ENCODE measurements at regions of chr9 and their contacts with region 1.

Region 1: GRCh38 chr9:136488247-136489214 is 5.7 kb upstream of the SEC16A start:
- DNase-seq: peak; percentile 71
- H3K4me3 Mint-ChIP-seq: no peak overlapping the region
- H3K27ac Mint-ChIP-seq: no peak overlapping the region
- H3K4me1 Mint-ChIP-seq: no peaks in the 10 kb centered on the region
- H3K27me3 Mint-ChIP-seq: no peaks in the 10 kb centered on the region
- CTCF ChIP-seq: peak; percentile 98

Region 2: DNA sequence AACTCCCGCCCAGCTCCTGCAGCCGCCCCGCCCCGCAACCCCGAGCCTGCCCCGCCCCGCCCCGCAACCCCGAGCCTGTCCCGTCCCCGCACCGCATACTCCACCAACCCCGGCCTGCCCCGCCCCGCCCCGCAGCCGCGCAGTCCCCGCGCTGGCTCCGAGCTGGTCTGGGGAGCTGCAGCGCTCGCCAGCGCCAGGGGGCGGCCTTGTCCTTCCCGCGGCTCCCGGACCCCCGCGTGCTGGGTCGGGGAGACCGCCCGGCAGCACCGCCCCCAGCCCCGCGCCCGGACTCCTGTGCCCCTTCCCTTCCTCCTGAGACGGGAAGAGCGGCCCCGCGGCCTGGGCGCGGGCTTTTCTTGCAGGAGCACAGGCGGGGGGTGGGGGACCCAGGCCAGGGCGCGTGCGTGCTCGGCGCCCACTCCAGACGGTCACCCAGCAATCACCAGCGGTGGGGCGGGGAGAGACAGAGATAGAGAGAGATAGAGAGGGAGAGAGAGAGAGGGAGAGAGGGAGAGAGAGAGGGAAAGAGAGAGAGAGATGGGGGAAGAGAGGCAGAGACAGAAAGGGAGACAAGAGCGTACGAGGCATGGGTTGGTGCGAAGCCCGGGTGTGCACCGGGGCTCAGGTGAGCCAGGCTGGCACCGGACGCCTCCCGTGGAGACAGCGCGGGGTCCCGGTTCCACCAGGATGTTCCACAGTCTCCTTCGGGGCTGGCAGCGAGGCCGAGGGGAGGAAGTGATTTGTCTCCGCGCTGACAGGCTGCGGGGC is 355.2 kb before region 1 on chr9:
- CTCF ChIA-PET with region 1: no interaction called
- POLR2A ChIA-PET with region 1: no interaction called
- intact Hi-C with region 1: no loop called
- DNase-seq: no peak
- H3K4me3 Mint-ChIP-seq: no peak overlapping the region
- H3K27ac Mint-ChIP-seq: no peak overlapping the region
- H3K4me1 Mint-ChIP-seq: no peaks in the 10 kb centered on the region
- H3K27me3 Mint-ChIP-seq: peaks cover 50% of the 10 kb centered on the region
- CTCF ChIP-seq: peak; percentile 34

Region 3: GRCh38 chr9:136211441-136212344 is 276.8 kb before region 1 on chr9:
- CTCF ChIA-PET with region 1: no interaction called
- POLR2A ChIA-PET with region 1: no interaction called
- intact Hi-C with region 1: no loop called
- DNase-seq: no peak
- H3K4me3 Mint-ChIP-seq: no peak overlapping the region
- H3K27ac Mint-ChIP-seq: no peak overlapping the region
- H3K4me1 Mint-ChIP-seq: no peaks in the 10 kb centered on the region
- H3K27me3 Mint-ChIP-seq: no peaks in the 10 kb centered on the region
- CTCF ChIP-seq: no peak

Region 4: GRCh38 chr9:136429683-136430590 is 58.6 kb before region 1 on chr9:
- CTCF ChIA-PET with region 1: no interaction called
- POLR2A ChIA-PET with region 1: no interaction called
- intact Hi-C with region 1: no loop called
- DNase-seq: no peak
- H3K4me3 Mint-ChIP-seq: no peak overlapping the region
- H3K27ac Mint-ChIP-seq: no peak overlapping the region
- H3K4me1 Mint-ChIP-seq: no peaks in the 10 kb centered on the region
- H3K27me3 Mint-ChIP-seq: no peaks in the 10 kb centered on the region
- CTCF ChIP-seq: no peak

Region 5: DNA sequence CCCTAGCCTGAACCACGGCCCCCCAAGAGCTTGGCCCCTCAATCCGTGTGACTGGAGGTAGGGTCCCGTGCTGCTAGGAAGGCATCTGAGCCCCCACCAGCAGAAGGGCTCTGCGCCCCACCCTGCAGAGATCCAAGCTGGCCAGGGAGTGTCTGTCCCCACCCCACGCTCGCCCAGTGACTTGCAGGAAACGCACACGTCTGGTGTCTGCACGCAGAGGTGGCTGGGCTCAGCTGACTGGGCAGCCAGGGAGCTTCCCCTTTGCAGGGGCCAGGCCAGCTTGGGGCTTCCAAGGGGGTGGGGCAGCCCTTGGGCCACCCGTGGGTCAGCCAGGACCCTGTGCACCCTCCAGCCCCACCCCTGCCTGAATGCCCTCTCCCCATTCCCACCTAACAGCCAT is 33.0 kb after region 1 on chr9:
- CTCF ChIA-PET with region 1: interaction called, 11 read pairs
- POLR2A ChIA-PET with region 1: no interaction called
- intact Hi-C with region 1: no loop called
- DNase-seq: no peak
- H3K4me3 Mint-ChIP-seq: no peak overlapping the region
- H3K27ac Mint-ChIP-seq: no peak overlapping the region
- H3K4me1 Mint-ChIP-seq: no peaks in the 10 kb centered on the region
- H3K27me3 Mint-ChIP-seq: no peaks in the 10 kb centered on the region
- CTCF ChIP-seq: no peak

Region 6: GRCh38 chr9:136631038-136632000 is 142.8 kb after region 1 on chr9:
- CTCF ChIA-PET with region 1: interaction called, 280 read pairs
- POLR2A ChIA-PET with region 1: interaction called, 84 read pairs
- intact Hi-C with region 1: loop called (anchors 1 kb)
- DNase-seq: peak; percentile 78
- H3K4me3 Mint-ChIP-seq: no peak overlapping the region
- H3K27ac Mint-ChIP-seq: no peak overlapping the region
- H3K4me1 Mint-ChIP-seq: peaks cover 11% of the 10 kb centered on the region
- H3K27me3 Mint-ChIP-seq: no peaks in the 10 kb centered on the region
- CTCF ChIP-seq: peak; percentile 82

Region 7: GRCh38 chr9:136694236-136694942 is 205.9 kb after region 1 on chr9:
- CTCF ChIA-PET with region 1: interaction called, 6 read pairs
- POLR2A ChIA-PET with region 1: no interaction called
- intact Hi-C with region 1: loop called (anchors 2 kb)
- DNase-seq: peak; percentile 62
- H3K4me3 Mint-ChIP-seq: no peak overlapping the region
- H3K27ac Mint-ChIP-seq: peak overlapping the region; percentile 70
- H3K4me1 Mint-ChIP-seq: peaks cover 24% of the 10 kb centered on the region
- H3K27me3 Mint-ChIP-seq: no peaks in the 10 kb centered on the region
- CTCF ChIP-seq: peak; percentile 79

Measured in MCF 10A (cell line).